ENCODE measurements at regions of chr1 and their contacts with region 1.

Region 1: GRCh38 chr1:241519308-241520079 is at the start of gene FH:
- DNase-seq: peak; percentile 100
- ATAC-seq: peak; percentile 95
- H3K4me3 ChIP-seq: peak within 1 kb of the TSS; percentile 77
- H3K27ac ChIP-seq: peak within 1 kb of the TSS; percentile 44
- H3K4me1 ChIP-seq: peaks cover 20% of the 10 kb centered on the region
- H3K27me3 ChIP-seq: no peaks in the 10 kb centered on the region
- CTCF ChIP-seq: no peak
- total RNA-seq, gene FH: 161 and 201 TPM in 2 replicates

Region 2: GRCh38 chr1:241413386-241413785 is 106.1 kb before region 1 on chr1:
- CTCF ChIA-PET with region 1: interaction called, 10 read pairs
- POLR2A ChIA-PET with region 1: no interaction called
- intact Hi-C with region 1: no loop called
- DNase-seq: peak; percentile 98
- ATAC-seq: peak; percentile 94
- H3K4me3 ChIP-seq: no peak overlapping the region
- H3K27ac ChIP-seq: no peak overlapping the region
- H3K4me1 ChIP-seq: peaks cover 13% of the 10 kb centered on the region
- H3K27me3 ChIP-seq: no peaks in the 10 kb centered on the region
- CTCF ChIP-seq: no peak

Region 3: DNA sequence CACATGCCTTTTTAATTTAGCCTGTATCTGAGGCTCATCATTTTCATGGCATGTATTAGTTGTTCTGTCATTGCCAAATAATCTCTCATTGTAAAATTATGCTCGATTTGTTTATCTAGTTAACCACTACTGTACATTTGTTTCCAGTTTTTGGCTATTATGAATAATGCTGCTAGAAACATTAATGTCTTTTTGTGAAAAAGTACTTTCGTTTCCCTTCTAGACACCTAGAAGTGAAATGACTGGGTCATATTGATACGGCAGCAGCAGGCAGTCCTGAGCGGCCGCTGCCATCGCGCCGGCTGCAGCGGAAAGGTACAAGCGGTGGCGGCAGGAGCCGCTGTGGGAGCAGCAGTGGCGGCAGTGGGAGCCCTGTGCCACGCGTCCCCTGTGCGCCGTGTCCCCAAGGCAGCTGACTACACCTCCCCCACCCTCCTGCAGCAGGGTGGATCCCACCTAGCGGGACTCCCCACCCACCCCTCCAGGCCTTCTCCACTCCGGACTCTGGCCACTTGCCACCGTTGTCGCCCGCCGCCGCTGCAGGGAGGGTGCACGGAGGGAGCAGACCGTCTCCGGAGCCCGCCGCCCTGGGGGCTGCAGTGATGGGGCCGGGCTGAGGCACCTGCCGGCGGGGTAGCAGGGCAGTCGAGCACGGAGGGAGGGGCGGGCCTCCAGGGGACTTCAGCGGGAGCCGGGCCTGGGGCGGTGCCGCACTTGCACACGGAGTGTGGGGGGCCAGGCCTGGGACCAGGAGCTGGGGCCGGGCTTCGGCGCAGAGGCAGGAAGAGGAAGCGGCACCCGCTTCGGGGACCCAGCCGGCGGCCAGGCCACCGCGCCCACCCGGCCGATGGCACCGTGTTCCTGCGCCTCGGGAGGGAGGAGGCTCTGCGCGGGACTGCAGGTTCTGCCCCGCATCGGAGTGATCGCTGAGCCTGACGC is 95.7 kb before region 1 on chr1:
- CTCF ChIA-PET with region 1: no interaction called
- POLR2A ChIA-PET with region 1: no interaction called
- intact Hi-C with region 1: no loop called
- DNase-seq: peak; percentile 74
- ATAC-seq: peak; percentile 87
- H3K4me3 ChIP-seq: peak overlapping the region; percentile 78
- H3K27ac ChIP-seq: no peak overlapping the region
- H3K4me1 ChIP-seq: peaks cover 24% of the 10 kb centered on the region
- H3K27me3 ChIP-seq: no peaks in the 10 kb centered on the region
- CTCF ChIP-seq: peak; percentile 70

Region 4: GRCh38 chr1:241605146-241605805 is 85.8 kb after region 1 on chr1:
- CTCF ChIA-PET with region 1: no interaction called
- POLR2A ChIA-PET with region 1: interaction called, 11 read pairs
- intact Hi-C with region 1: no loop called
- DNase-seq: peak; percentile 98
- ATAC-seq: peak; percentile 34
- H3K4me3 ChIP-seq: no peak overlapping the region
- H3K27ac ChIP-seq: peak overlapping the region; percentile 88
- H3K4me1 ChIP-seq: peaks cover 74% of the 10 kb centered on the region
- H3K27me3 ChIP-seq: no peaks in the 10 kb centered on the region
- CTCF ChIP-seq: peak; percentile 99

Region 5: GRCh38 chr1:241658081-241658793 is 138.7 kb after region 1 on chr1:
- CTCF ChIA-PET with region 1: no interaction called
- POLR2A ChIA-PET with region 1: interaction called, 11 read pairs
- intact Hi-C with region 1: no loop called
- DNase-seq: peak; percentile 76
- ATAC-seq: peak; percentile 68
- H3K4me3 ChIP-seq: no peak overlapping the region
- H3K27ac ChIP-seq: peak overlapping the region; percentile 26
- H3K4me1 ChIP-seq: peaks cover 36% of the 10 kb centered on the region
- H3K27me3 ChIP-seq: no peaks in the 10 kb centered on the region
- CTCF ChIP-seq: no peak